Mammary epithelial cell (primary cell): ENCODE measurements at regions of chr5 and their contacts with region 1.

Region 1: GRCh38 chr5:53481887-53482716 is 1.7 kb downstream of the FST start:
- DNase-seq: peak; percentile 78
- H3K4me3 ChIP-seq: peak overlapping the region; percentile 85 to 97 (median 96)
- H3K27ac ChIP-seq: peak overlapping the region; percentile 98
- H3K4me1 ChIP-seq: peaks cover 27% of the 10 kb centered on the region
- H3K27me3 ChIP-seq: no peaks in the 10 kb centered on the region
- CTCF ChIP-seq: no peak

Region 2: DNA sequence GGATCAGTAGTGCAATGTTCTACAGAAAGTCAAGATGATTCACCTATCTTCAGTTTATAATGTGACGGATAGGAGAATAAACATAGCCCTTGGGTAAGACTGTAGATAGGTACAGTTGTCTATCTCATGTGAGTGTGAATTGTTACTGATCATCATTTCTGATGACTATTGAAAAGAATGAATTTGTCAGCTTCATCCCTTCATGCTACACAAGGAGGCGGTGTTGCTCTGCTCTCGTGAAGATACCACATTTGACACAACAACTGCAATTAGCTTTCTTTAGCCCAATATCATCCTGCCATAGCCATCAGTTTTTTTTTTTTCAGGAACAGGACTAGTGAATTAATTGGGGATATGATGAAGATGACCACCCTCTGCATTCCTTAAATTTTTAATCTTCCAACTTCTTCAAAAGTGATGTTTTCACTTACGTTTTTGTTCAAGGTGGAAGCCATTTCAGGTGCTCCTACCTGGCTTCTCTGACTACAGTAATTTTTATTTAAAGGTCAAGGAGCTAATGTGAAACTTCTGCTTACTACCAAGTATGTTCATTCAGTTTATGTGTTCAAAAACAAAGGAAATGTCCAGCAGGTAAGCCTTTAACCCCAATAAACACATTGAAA is 219.6 kb before region 1 on chr5:
- CTCF ChIA-PET with region 1: no interaction called
- dilution Hi-C with region 1: loop called (anchors 5 kb)
- in situ Hi-C with region 1: no loop called
- intact Hi-C with region 1: loop called (anchors 1 kb)
- DNase-seq: peak; percentile 60
- H3K4me3 ChIP-seq: no peak overlapping the region
- H3K27ac ChIP-seq: peak overlapping the region; percentile 48
- H3K4me1 ChIP-seq: peaks cover 44% of the 10 kb centered on the region
- H3K27me3 ChIP-seq: no peaks in the 10 kb centered on the region
- CTCF ChIP-seq: peak; percentile 63 to 68

Region 3: DNA sequence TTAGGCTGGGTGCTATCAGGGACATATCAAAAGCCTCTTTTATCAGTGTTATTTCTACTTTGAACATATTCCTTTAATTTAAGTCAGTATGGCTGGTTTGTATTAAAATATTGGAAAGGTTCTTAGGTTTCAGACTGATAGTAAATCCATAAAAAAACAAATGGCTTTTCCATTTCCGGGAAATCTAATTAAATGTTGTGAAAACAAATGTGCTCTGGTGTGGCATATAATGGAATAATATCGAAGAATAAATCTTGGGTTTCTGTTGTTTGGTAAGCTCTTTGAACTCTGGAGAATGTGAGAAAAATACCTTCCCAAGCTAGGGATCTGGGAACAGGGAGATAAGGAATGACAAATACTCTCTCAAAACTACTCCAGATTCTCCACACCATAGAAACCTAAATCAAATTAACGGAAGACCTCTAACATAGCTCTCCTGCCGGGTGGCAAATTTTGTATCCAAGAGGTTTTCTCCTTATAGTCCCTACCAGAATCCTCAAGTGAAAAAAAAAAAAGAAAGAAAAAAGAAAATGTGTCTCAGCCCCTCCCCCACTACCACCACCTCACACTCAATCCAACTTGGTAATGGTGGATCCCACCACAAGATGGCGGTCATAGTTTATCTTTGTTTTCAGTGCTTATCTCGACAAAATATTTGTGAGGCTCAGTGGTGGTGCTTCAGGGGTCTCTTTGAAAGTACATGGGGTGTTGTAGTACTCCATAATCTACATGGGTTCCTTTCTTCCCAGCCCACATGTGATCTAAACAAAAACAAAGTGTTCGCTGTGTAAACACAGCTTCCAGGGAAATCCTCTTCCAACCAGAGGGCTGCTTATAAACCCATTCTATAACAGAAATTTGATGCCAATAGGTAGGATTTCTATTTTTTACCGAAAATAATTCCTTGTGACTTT is 56.2 kb before region 1 on chr5:
- CTCF ChIA-PET with region 1: no interaction called
- dilution Hi-C with region 1: no loop called
- in situ Hi-C with region 1: no loop called
- intact Hi-C with region 1: loop called (anchors 2 kb)
- DNase-seq: no peak
- H3K4me3 ChIP-seq: no peak overlapping the region
- H3K27ac ChIP-seq: peak overlapping the region; percentile 100
- H3K4me1 ChIP-seq: peaks cover 44% of the 10 kb centered on the region
- H3K27me3 ChIP-seq: no peaks in the 10 kb centered on the region
- CTCF ChIP-seq: peak; percentile 12 to 24

Region 4: DNA sequence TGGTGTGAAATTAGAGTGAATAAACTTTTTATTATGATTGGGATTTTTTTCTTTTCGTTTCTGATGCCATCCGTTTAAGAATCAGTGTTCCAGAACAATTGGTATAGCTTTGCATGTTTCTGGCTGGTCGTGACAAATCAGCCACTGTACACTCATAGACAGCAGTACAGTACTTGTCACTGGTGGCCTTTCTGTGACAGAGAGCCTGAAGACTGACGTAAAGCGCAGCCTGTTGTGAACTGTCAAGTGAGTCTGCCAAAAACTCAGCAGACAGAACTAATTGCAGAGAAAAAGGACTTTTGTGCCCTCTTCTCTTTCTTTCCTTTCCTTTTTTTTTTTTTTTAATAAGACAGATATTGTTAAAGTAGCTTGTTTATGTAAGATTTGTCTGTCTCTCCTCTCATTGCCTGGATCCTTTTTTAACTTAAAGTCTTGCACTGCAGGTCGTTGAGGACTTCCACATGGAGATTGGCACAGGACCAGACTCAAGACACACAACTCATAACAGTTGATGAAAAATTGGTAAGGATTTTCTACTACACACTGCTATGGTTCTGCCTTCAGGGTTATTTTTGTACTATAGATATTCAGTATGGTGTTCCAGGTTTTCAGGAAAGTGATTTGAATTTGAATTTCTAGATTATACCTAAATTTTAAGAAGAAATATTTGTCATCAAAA is 121.0 kb after region 1 on chr5:
- CTCF ChIA-PET with region 1: no interaction called
- dilution Hi-C with region 1: no loop called
- in situ Hi-C with region 1: no loop called
- intact Hi-C with region 1: loop called (anchors 5 kb)
- DNase-seq: no peak
- H3K4me3 ChIP-seq: no peak overlapping the region
- H3K27ac ChIP-seq: no peak overlapping the region
- H3K4me1 ChIP-seq: peaks cover 3% of the 10 kb centered on the region
- H3K27me3 ChIP-seq: no peaks in the 10 kb centered on the region
- CTCF ChIP-seq: no peak

Region 5: DNA sequence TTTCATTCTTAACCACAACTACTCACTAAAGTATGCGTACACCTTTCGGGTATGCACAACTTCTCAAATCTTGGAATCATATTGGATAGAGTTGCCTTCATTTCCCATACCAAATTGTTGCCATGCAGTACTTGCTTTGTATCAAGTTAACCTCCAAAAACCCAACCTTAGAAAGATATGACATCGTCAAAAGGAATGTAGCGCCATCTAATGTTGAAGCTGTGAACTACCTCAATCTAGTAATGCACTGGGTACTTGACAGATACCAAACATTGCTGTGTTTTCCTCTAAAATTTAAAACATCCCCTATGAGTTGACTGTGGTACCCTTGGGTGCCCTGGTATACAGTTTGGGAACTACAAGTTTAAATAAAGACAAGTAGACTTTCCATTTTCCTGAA is 509.8 kb after region 1 on chr5:
- CTCF ChIA-PET with region 1: no interaction called
- dilution Hi-C with region 1: no loop called
- in situ Hi-C with region 1: no loop called
- intact Hi-C with region 1: loop called (anchors 2 kb)
- DNase-seq: no peak
- H3K4me3 ChIP-seq: no peak overlapping the region
- H3K27ac ChIP-seq: no peak overlapping the region
- H3K4me1 ChIP-seq: peaks cover 12% of the 10 kb centered on the region
- H3K27me3 ChIP-seq: no peaks in the 10 kb centered on the region
- CTCF ChIP-seq: peak; percentile 37 to 50

Region 6: GRCh38 chr5:54234304-54234933 is 752.3 kb after region 1 on chr5:
- CTCF ChIA-PET with region 1: no interaction called
- dilution Hi-C with region 1: no loop called
- in situ Hi-C with region 1: loop called in 1 of 2 experiments (anchors 10 kb)
- intact Hi-C with region 1: no loop called
- DNase-seq: peak; percentile 8
- H3K4me3 ChIP-seq: no peak overlapping the region
- H3K27ac ChIP-seq: no peak overlapping the region
- H3K4me1 ChIP-seq: no peaks in the 10 kb centered on the region
- H3K27me3 ChIP-seq: no peaks in the 10 kb centered on the region
- CTCF ChIP-seq: peak; percentile 34 to 53